ENCODE measurements at regions of chr15 and their contacts with region 1.

Region 1: DNA sequence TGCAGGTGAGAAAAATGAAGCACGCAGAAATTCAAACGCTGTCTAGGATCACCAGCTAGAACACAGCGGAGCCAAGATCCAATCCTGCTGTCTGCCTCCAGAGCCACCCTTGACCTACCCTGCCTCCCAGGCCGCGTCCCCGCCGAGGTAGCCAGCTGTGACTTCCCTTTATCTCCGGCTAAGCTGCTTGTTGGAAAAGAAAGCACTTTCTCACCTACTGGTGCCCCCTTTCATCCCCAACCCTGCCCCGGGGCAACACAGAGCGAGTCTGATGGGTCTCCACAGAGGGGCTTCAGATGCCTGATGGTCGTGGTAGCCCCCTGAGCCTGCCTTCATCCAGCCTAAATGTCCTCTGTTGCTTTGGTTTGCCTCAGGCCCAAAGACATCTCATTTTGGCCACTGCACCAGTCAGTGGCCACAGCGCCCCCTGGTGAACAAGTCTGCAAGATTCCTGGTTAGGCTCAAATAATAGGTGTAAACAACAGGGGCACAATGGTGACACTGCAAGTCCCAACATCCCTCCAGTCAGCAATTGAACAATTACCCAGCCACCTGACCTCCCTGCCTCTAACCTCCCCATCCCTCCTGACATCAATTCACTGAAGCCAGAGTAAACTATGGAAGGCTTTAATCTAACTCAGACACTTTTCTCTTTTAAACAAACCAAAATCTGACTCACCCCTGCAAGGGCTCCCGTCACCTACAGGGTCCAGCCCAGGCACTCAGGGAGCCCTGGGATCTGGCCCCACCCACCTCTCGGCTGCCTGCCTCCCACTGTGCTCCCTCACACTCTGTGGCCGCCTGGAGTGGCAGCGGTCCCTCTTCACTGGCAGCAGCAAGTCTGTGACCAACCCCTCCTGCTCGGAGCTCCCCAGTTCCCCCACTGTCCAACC is 27.3 kb upstream of the BCL2L10 start:
- DNase-seq: peak; percentile 51
- ATAC-seq: no peak
- H3K4me3 Mint-ChIP-seq: no peak overlapping the region
- H3K27ac Mint-ChIP-seq: no peak overlapping the region
- H3K4me1 Mint-ChIP-seq: peaks cover 23% of the 10 kb centered on the region
- H3K27me3 Mint-ChIP-seq: no peaks in the 10 kb centered on the region
- CTCF ChIP-seq: peak; percentile 39

Region 2: GRCh38 chr15:51888593-51889195 is 251.2 kb before region 1 on chr15:
- CTCF ChIA-PET with region 1: interaction called, 3 read pairs
- POLR2A ChIA-PET with region 1: no interaction called
- intact Hi-C with region 1: loop called (anchors 10 kb)
- DNase-seq: no peak
- ATAC-seq: no peak
- H3K4me3 Mint-ChIP-seq: no peak overlapping the region
- H3K27ac Mint-ChIP-seq: no peak overlapping the region
- H3K4me1 Mint-ChIP-seq: peaks cover 4% of the 10 kb centered on the region
- H3K27me3 Mint-ChIP-seq: no peaks in the 10 kb centered on the region
- CTCF ChIP-seq: peak; percentile 58

Region 3: DNA sequence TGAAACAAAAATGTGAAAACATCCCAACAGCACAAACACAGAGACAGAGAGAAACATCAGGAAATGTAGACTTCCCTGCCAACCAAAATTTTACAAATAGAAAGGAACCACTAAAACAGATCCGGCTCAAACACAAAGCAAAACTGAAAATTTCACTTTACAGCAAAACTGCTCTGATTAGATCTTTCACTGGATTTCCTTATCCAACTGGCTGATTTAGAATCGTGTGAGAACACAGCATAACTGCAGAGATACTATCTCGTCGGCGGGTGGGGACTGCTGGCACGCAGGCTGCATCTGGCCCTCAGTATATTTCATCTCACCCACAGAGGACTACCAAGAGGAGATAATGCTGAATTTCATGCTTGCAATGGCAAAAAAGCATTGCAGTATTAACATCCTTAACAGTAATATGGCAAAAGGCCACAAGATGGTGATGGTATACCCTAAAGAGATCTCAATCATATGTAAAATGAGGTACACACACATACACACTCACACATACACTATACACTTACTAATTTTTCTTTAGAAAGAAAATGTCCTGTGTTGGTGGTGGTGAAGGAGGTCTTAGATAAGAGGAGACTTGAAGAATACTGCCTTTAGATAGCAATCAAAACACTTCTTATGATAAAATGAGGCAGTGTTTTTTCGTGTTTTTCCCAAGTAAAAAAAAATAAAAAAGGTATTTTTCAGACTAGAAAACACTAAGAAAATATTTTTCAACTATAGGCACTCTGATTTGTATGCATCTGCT is 157.7 kb before region 1 on chr15:
- CTCF ChIA-PET with region 1: interaction called, 5 read pairs
- POLR2A ChIA-PET with region 1: no interaction called
- intact Hi-C with region 1: loop called (anchors 1 kb)
- DNase-seq: no peak
- ATAC-seq: peak; percentile 90
- H3K4me3 Mint-ChIP-seq: peak overlapping the region; percentile 57
- H3K27ac Mint-ChIP-seq: no peak overlapping the region
- H3K4me1 Mint-ChIP-seq: peaks cover 9% of the 10 kb centered on the region
- H3K27me3 Mint-ChIP-seq: no peaks in the 10 kb centered on the region
- CTCF ChIP-seq: no peak

Region 4: GRCh38 chr15:52103217-52104207 is 36.3 kb before region 1 on chr15:
- CTCF ChIA-PET with region 1: no interaction called
- POLR2A ChIA-PET with region 1: no interaction called
- intact Hi-C with region 1: loop called (anchors 5 kb)
- DNase-seq: no peak
- ATAC-seq: peak; percentile 69
- H3K4me3 Mint-ChIP-seq: no peak overlapping the region
- H3K27ac Mint-ChIP-seq: peak overlapping the region; percentile 27
- H3K4me1 Mint-ChIP-seq: peaks cover 38% of the 10 kb centered on the region
- H3K27me3 Mint-ChIP-seq: no peaks in the 10 kb centered on the region
- CTCF ChIP-seq: no peak

Region 5: GRCh38 chr15:52154896-52155865 is 15.3 kb after region 1 on chr15:
- CTCF ChIA-PET with region 1: no interaction called
- POLR2A ChIA-PET with region 1: no interaction called
- intact Hi-C with region 1: no loop called
- DNase-seq: no peak
- ATAC-seq: no peak
- H3K4me3 Mint-ChIP-seq: no peak overlapping the region
- H3K27ac Mint-ChIP-seq: no peak overlapping the region
- H3K4me1 Mint-ChIP-seq: peaks cover 23% of the 10 kb centered on the region
- H3K27me3 Mint-ChIP-seq: no peaks in the 10 kb centered on the region
- CTCF ChIP-seq: no peak

Region 6: GRCh38 chr15:52780172-52780980 is 640.5 kb after region 1 on chr15:
- CTCF ChIA-PET with region 1: no interaction called
- POLR2A ChIA-PET with region 1: no interaction called
- intact Hi-C with region 1: no loop called
- DNase-seq: peak; percentile 55
- ATAC-seq: peak; percentile 83
- H3K4me3 Mint-ChIP-seq: peak overlapping the region; percentile 81
- H3K27ac Mint-ChIP-seq: peak overlapping the region; percentile 91
- H3K4me1 Mint-ChIP-seq: peaks cover 34% of the 10 kb centered on the region
- H3K27me3 Mint-ChIP-seq: peaks cover 46% of the 10 kb centered on the region
- CTCF ChIP-seq: peak; percentile 97